Dendritic cell treated with granulocyte-macrophage colony-stimulating factor and Interleukin-4, amounts not matched to agents 40 ng/mL and 50 ng/mL, for 4 days (primary cell): ENCODE measurements at regions of chr14 and their contacts with region 1.

Region 1: GRCh38 chr14:88023658-88024187 is 18.8 kb downstream of the GPR65 start:
- H3K4me3 Mint-ChIP-seq: no peak overlapping the region
- H3K27ac Mint-ChIP-seq: peak overlapping the region; percentile 44
- H3K4me1 Mint-ChIP-seq: peaks cover 38% of the 10 kb centered on the region
- H3K27me3 Mint-ChIP-seq: no peaks in the 10 kb centered on the region

Region 2: GRCh38 chr14:87944987-87945604 is 78.6 kb before region 1 on chr14:
- intact Hi-C with region 1: no loop called
- H3K4me3 Mint-ChIP-seq: no peak overlapping the region
- H3K27ac Mint-ChIP-seq: no peak overlapping the region
- H3K4me1 Mint-ChIP-seq: peaks cover 6% of the 10 kb centered on the region
- H3K27me3 Mint-ChIP-seq: no peaks in the 10 kb centered on the region

Region 3: DNA sequence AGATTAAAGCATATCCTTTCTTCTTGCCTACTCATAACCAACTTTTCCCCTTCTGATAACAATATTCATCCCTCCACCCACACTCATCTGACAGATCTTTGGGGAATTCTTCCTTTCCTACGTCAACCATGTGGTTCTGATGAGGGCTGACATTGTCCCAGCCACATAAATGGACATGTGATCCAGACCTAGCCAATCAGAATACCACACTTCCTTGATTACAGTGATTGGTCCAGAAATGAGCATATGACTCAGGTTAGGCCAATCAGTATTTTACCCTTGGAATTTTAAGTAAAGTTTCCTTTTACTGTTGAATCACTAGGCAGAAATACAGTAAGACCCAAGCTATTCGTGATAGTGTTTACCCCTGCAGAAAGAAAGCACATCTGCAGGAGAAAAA is 40.1 kb after region 1 on chr14:
- intact Hi-C with region 1: no loop called
- H3K4me3 Mint-ChIP-seq: no peak overlapping the region
- H3K27ac Mint-ChIP-seq: no peak overlapping the region
- H3K4me1 Mint-ChIP-seq: no peaks in the 10 kb centered on the region
- H3K27me3 Mint-ChIP-seq: peaks cover 21% of the 10 kb centered on the region

Region 4: GRCh38 chr14:88089445-88089844 is 65.7 kb after region 1 on chr14:
- intact Hi-C with region 1: loop called (anchors 10 kb)
- H3K4me3 Mint-ChIP-seq: no peak overlapping the region
- H3K27ac Mint-ChIP-seq: no peak overlapping the region
- H3K4me1 Mint-ChIP-seq: peaks cover 8% of the 10 kb centered on the region
- H3K27me3 Mint-ChIP-seq: peaks cover 24% of the 10 kb centered on the region